Naive thymus-derived CD4-positive, alpha-beta T cell (primary cell): ENCODE measurements at regions of chr22 and their contacts with region 1.

Region 1: DNA sequence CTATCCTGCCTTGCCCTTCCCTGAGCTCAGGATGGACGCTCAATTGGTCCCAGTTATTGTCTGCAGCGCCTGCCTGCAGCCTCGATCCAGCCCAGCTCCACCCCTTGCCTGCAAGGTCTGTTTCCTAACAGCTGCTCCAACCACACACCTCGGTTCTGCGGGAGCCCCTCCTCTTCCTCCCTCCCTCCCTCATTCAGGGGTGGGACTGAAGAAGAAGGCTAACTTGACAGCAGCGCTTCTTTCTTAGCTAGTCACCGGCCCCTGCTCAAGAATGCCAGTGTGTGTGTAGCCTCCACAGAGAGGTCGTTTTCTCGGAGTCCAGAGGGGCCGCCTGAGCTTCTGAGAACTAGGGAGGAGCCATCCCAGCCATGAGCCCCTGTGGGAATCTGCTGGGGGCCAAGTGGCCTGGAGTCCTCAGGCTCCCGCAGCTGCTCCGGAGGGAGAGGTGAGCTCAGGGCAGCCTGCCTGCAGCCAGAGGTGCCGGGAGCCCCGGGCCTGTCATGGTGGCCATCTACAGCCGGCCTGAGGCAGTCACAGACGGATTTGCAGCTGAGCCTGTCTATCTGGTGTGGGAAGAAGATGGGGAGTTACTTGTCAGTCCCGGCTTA is 36.1 kb downstream of the LIMK2 start:
- DNase-seq: peak; percentile 33 to 78 (median 73)
- ATAC-seq: peak; percentile 100
- H3K4me3 ChIP-seq: no peak overlapping the region
- H3K4me3 Mint-ChIP-seq: peak overlapping the region; percentile 73 to 93 (median 83)
- H3K27ac ChIP-seq: no peak overlapping the region
- H3K27ac Mint-ChIP-seq: peak overlapping the region; percentile 20 to 87 (median 71)
- H3K4me1 ChIP-seq: peaks cover 9 to 17% of the 10 kb centered on the region in 2 donors
- H3K4me1 Mint-ChIP-seq: peaks cover 8 to 41% (median 28%) of the 10 kb centered on the region in 7 donors
- H3K27me3 ChIP-seq: no peaks in the 10 kb centered on the region
- H3K27me3 Mint-ChIP-seq: no peaks in the 10 kb centered on the region

Region 2: GRCh38 chr22:30490399-30490798 is 757.8 kb before region 1 on chr22:
- CTCF ChIA-PET with region 1: no interaction called
- POLR2A ChIA-PET with region 1: no interaction called
- intact Hi-C with region 1: no loop called
- DNase-seq: no peak
- ATAC-seq: no peak
- H3K4me3 ChIP-seq: no peak overlapping the region
- H3K4me3 Mint-ChIP-seq: no peak overlapping the region
- H3K27ac ChIP-seq: no peak overlapping the region
- H3K27ac Mint-ChIP-seq: no peak overlapping the region
- H3K4me1 ChIP-seq: no peaks in the 10 kb centered on the region
- H3K4me1 Mint-ChIP-seq: no peaks in the 10 kb centered on the region
- H3K27me3 ChIP-seq: no peaks in the 10 kb centered on the region
- H3K27me3 Mint-ChIP-seq: peaks cover 0 to 8% (median 4%) of the 10 kb centered on the region in 5 donors

Region 3: DNA sequence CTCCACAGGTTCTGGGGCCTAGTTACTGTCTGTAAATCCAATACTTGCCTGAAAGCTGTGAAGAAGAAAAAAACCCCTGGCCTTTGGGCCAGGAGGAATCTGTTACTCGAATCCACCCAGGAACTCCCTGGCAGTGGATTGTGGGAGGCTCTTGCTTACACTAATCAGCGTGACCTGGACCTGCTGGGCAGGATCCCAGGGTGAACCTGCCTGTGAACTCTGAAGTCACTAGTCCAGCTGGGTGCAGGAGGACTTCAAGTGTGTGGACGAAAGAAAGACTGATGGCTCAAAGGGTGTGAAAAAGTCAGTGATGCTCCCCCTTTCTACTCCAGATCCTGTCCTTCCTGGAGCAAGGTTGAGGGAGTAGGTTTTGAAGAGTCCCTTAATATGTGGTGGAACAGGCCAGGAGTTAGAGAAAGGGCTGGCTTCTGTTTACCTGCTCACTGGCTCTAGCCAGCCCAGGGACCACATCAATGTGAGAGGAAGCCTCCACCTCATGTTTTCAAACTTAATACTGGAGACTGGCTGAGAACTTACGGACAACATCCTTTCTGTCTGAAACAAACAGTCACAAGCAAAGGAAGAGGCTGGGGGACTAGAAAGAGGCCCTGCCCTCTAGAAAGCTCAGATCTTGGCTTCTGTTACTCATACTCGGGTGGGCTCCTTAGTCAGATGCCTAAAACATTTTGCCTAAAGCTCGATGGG is 30.5 kb after region 1 on chr22:
- CTCF ChIA-PET with region 1: interaction called, 5 read pairs
- POLR2A ChIA-PET with region 1: interaction called, 17 read pairs
- intact Hi-C with region 1: loop called in 1 of 2 experiments (anchors 1 kb)
- DNase-seq: peak in 7 of 9 donors; percentile 67 to 85 (median 79)
- ATAC-seq: peak; percentile 75
- H3K4me3 ChIP-seq: peak overlapping the region; percentile 35
- H3K4me3 Mint-ChIP-seq: peak overlapping the region; percentile 74 to 97 (median 80)
- H3K27ac ChIP-seq: peak overlapping the region; percentile 100
- H3K27ac Mint-ChIP-seq: peak overlapping the region; percentile 96 to 100 (median 99)
- H3K4me1 ChIP-seq: peaks cover 33 to 94% of the 10 kb centered on the region in 2 donors
- H3K4me1 Mint-ChIP-seq: peaks cover 52 to 98% (median 94%) of the 10 kb centered on the region in 7 donors
- H3K27me3 ChIP-seq: no peaks in the 10 kb centered on the region
- H3K27me3 Mint-ChIP-seq: no peaks in the 10 kb centered on the region